Common myeloid progenitor, CD34-positive (primary cell): ENCODE measurements at regions of chr9 and their contacts with region 1.

Region 1: GRCh38 chr9:97921959-97922724 is at the start of gene TRMO:
- DNase-seq: peak; percentile 99
- H3K4me3 ChIP-seq: peak within 1 kb of the TSS; percentile 54 to 91 (median 78)
- H3K27ac ChIP-seq: peak within 1 kb of the TSS; percentile 97 to 99
- H3K4me1 ChIP-seq: peaks cover 34 to 75% (median 55%) of the 10 kb centered on the region in 4 experiments
- H3K27me3 ChIP-seq: no peaks in the 10 kb centered on the region

Region 2: DNA sequence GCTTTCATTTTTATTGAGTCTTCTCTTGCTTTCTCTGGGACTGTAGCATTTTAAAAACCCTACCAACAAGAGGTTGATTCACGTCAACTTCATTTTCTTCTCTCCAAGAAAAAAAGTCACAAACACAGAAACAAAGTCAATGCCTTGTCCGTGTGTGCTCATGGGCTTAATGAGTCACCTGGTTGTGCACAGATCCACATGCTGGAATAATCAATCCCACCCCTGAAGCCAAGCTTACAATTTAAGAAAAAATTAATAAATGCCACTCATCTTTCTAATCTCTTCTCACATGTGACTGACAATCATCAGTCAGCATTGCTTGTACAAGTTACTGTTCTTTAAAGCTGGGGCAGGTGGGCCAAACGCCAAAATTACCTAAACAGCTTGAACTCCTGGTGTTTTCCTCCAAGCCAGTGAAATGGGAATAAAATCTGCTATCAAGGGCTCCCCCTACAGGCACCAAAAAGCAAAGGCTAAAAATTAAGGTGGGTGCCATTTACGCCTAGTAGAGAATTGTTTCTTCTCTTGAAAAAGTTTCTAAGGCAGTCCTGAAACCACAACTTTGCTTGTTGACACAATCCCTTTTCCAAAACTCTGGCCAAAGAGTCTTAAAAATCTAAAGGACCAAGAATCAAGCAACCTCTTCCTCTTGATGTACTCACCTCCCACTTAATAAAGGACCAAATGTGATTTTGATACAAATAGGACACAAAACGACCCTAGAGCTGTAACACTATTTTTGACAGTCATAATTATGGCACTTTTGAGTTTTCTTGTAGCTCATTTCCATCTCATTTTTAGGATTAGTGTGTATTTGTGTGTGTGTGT is 21.2 kb before region 1 on chr9:
- CTCF ChIA-PET with region 1: interaction called, 72 read pairs
- POLR2A ChIA-PET with region 1: interaction called, 3 read pairs
- DNase-seq: peak in 2 of 3 donors; percentile 56 to 66
- H3K4me3 ChIP-seq: no peak overlapping the region
- H3K27ac ChIP-seq: no peak overlapping the region
- H3K4me1 ChIP-seq: peaks cover 10 to 15% (median 14%) of the 10 kb centered on the region in 4 experiments
- H3K27me3 ChIP-seq: no peaks in the 10 kb centered on the region

Region 3: GRCh38 chr9:97934321-97935115 is 12.4 kb after region 1 on chr9:
- CTCF ChIA-PET with region 1: interaction called, 53 read pairs
- POLR2A ChIA-PET with region 1: interaction called, 3 read pairs
- DNase-seq: peak in 2 of 3 donors; percentile 61 to 71
- H3K4me3 ChIP-seq: peak overlapping the region in 6 of 7 experiments; percentile 27 to 69 (median 48)
- H3K27ac ChIP-seq: peak overlapping the region; percentile 51 to 92
- H3K4me1 ChIP-seq: peaks cover 47 to 91% (median 75%) of the 10 kb centered on the region in 4 experiments
- H3K27me3 ChIP-seq: no peaks in the 10 kb centered on the region

Region 4: DNA sequence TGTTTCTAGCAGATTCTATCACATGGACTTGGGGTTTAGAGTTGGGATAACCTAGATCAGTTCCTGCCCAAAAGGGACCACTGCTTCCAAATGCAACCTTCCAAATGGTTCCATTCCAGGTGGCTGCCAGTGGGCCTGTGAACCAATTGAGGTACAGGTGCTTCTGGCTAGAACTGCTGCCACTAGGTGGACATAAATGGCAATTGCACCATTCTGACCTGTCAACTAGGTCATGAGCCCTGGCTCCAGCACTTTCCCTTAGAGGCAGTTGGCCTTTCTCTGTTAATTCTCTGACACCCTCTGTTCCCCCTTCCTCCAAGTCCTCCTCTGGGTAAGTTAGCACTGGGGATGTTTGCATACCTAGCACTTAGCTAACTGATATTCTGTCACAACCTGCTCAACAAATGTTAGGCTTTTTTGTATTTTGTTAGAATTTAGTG is 32.4 kb after region 1 on chr9:
- CTCF ChIA-PET with region 1: interaction called, 103 read pairs
- POLR2A ChIA-PET with region 1: no interaction called
- DNase-seq: peak; percentile 74 to 77 (median 76)
- H3K4me3 ChIP-seq: no peak overlapping the region
- H3K27ac ChIP-seq: peak overlapping the region in 1 of 2 experiments; percentile 6
- H3K4me1 ChIP-seq: peaks cover 0 to 21% (median 13%) of the 10 kb centered on the region in 4 experiments
- H3K27me3 ChIP-seq: no peaks in the 10 kb centered on the region

Region 5: DNA sequence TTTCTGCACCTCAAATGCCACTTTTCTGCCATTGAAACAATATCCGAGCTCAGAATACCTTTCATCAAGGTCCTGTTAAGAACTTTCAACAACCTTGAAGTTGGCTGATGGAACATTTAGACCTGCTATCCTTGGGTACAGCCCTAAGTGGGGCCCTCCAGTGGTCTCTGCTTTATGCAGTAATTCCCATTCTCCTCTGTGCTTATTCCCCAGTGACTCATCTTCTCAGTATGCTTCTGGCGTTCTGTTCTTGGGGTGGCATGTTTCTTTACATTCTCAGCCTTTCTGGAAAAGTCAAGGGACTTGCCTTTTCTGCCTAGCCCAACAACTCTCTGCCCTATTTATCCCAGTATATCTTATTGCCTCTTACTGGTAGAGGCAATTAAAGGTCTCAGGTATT is 68.1 kb after region 1 on chr9:
- CTCF ChIA-PET with region 1: interaction called, 34 read pairs
- POLR2A ChIA-PET with region 1: interaction called, 31 read pairs
- DNase-seq: peak in 1 of 3 donors; percentile 40
- H3K4me3 ChIP-seq: no peak overlapping the region
- H3K27ac ChIP-seq: no peak overlapping the region
- H3K4me1 ChIP-seq: peaks cover 33 to 86% (median 77%) of the 10 kb centered on the region in 4 experiments
- H3K27me3 ChIP-seq: no peaks in the 10 kb centered on the region

Region 6: DNA sequence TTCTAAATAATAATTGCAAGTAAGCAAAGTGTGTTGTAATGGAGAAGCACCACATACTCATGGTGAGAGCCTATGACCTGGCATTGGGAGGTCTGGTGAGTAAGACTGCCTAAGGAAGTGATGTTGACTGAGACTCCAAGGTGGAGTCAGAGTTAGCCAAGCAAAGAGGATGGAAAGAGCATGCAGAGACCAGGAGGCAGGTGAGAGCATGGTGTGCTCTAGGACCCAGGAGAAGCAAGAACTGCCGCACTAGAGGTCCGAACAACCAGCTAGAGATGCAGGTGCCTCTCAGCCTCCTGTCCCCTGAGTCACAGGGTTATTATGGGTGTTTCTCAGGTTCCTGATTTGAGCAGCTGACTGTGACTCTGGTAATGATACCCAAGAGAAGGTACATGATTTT is 88.3 kb after region 1 on chr9:
- CTCF ChIA-PET with region 1: interaction called, 16 read pairs
- POLR2A ChIA-PET with region 1: no interaction called
- DNase-seq: peak; percentile 36 to 80 (median 68)
- H3K4me3 ChIP-seq: peak overlapping the region in 2 of 7 experiments; percentile 0 to 2
- H3K27ac ChIP-seq: no peak overlapping the region
- H3K4me1 ChIP-seq: peaks cover 0 to 22% (median 10%) of the 10 kb centered on the region in 4 experiments
- H3K27me3 ChIP-seq: no peaks in the 10 kb centered on the region

Region 7: DNA sequence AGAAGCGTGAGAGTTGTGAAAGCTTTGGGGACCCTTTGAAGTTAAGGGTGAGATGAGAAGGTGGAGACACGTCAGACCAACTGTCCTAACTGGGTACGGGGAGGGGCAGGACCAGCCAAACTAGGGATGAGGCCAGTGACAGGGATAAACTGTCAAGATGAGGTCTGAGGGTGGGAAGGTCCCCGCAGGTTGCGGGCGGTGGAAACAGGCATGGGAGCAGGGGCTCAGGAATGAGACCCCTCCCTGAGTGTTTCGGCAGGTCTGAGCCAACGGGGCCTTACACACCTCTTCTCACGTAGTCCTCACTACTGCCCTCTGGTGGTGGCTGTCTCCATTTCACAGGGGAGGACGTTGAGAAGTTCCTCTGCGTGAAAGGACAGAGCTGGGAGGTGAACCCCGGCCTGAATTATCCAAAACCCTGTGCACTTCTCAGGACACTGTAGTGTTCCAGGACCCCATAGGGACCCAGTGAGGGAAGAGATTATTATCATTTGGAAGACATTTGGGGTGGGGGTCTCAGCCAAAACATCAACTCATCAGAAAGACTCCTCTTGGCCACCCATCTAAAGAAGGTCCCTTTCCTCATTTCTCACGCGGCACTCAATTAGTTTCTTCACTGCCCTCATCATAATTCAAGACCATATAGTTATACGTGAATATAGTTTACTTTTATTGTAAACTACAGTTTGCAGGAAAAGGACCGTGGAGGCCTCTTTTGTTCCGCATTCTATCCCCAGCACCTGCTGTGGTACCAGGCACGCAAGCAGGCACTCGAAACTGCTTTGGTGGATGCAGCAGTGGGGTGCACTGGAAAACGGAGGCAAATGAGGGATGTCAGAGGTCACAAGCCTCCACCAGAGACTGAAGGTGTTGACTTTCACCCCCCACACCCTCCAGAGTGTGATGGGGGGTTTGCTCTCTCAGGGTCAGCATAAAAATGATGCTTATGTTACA is 112.7 kb after region 1 on chr9:
- CTCF ChIA-PET with region 1: interaction called, 111 read pairs
- POLR2A ChIA-PET with region 1: interaction called, 3 read pairs
- DNase-seq: peak; percentile 86 to 92 (median 86)
- H3K4me3 ChIP-seq: peak overlapping the region in 4 of 7 experiments; percentile 2 to 70 (median 30)
- H3K27ac ChIP-seq: no peak overlapping the region
- H3K4me1 ChIP-seq: peaks cover 3 to 15% (median 12%) of the 10 kb centered on the region in 4 experiments
- H3K27me3 ChIP-seq: no peaks in the 10 kb centered on the region